ENCODE measurements at regions of chr9 and their contacts with region 1.

Region 1: DNA sequence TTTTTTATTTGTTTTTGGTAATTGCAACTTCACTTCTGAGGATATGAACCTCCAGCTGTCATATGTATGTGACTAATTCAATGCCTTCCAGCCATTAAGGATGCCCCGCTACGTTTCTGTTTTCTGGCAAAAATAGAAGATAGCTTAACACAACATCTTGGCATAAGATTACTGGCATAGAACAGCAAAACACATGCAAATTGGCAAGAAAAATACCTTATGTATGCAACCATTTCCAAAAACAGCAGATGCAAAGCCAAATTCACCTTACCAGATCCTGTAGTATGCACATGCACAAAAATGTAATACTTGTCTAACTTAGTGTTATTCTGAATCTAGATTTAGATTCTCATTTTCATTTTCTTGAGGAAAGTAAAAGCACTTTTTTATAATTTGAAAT is 461.1 kb upstream of the CYLC2 start:
- DNase-seq: no peak
- ATAC-seq: no peak
- H3K4me3 ChIP-seq: no peak overlapping the region
- H3K27ac ChIP-seq: no peak overlapping the region
- H3K4me1 ChIP-seq: no peaks in the 10 kb centered on the region
- H3K27me3 ChIP-seq: no peaks in the 10 kb centered on the region
- CTCF ChIP-seq: no peak

Region 2: DNA sequence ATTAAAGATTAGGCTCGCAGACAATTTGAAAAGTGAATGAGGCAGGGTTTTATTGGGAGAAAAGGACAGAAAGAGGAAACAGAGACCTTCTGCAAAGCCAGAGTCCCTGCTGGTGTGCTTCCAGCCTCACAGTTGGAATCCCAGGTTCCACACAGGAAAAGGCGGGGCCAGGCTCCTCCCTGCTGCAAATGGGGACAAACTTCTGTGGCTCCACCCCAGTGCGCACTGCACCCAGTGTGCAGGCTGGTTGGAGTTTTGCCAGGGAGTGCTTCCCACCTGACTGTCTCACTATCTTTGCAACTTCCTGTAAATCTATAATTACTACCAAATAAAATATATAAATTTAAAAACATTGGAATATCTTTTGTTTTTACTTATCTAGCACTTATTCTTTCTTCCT is 409.6 kb before region 1 on chr9:
- CTCF ChIA-PET with region 1: no interaction called
- POLR2A ChIA-PET with region 1: no interaction called
- in situ Hi-C with region 1: no loop called
- intact Hi-C with region 1: no loop called
- DNase-seq: no peak
- ATAC-seq: no peak
- H3K4me3 ChIP-seq: no peak overlapping the region
- H3K27ac ChIP-seq: no peak overlapping the region
- H3K4me1 ChIP-seq: no peaks in the 10 kb centered on the region
- H3K27me3 ChIP-seq: no peaks in the 10 kb centered on the region
- CTCF ChIP-seq: no peak

Region 3: GRCh38 chr9:102405218-102405867 is 128.7 kb before region 1 on chr9:
- CTCF ChIA-PET with region 1: no interaction called
- POLR2A ChIA-PET with region 1: no interaction called
- in situ Hi-C with region 1: no loop called
- intact Hi-C with region 1: no loop called
- DNase-seq: no peak
- ATAC-seq: no peak
- H3K4me3 ChIP-seq: no peak overlapping the region
- H3K27ac ChIP-seq: no peak overlapping the region
- H3K4me1 ChIP-seq: no peaks in the 10 kb centered on the region
- H3K27me3 ChIP-seq: no peaks in the 10 kb centered on the region
- CTCF ChIP-seq: no peak

Region 4: DNA sequence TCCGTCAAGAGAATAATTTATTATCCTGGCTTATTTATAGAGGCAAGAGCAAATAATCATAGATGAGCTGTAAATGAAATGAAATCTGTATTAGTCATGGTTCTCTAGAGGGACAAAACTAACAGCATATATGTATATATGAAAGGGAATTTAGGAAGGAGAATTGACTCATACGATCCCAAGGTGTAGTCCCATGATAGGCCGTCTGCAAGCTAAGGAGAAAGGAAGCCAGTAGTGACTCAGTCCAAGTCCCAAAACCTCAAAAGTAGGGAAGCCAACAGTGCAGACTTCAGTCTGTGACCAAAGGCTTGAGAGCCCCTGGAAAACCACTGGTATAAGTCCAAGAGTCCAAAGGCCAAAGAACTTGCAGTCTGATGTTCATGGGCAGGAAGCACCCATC is 54.8 kb before region 1 on chr9:
- CTCF ChIA-PET with region 1: no interaction called
- POLR2A ChIA-PET with region 1: no interaction called
- in situ Hi-C with region 1: no loop called
- intact Hi-C with region 1: loop called (anchors 10 kb)
- DNase-seq: no peak
- ATAC-seq: no peak
- H3K4me3 ChIP-seq: no peak overlapping the region
- H3K27ac ChIP-seq: no peak overlapping the region
- H3K4me1 ChIP-seq: no peaks in the 10 kb centered on the region
- H3K27me3 ChIP-seq: no peaks in the 10 kb centered on the region
- CTCF ChIP-seq: no peak

Region 5: GRCh38 chr9:102507044-102507687 is 26.9 kb before region 1 on chr9:
- CTCF ChIA-PET with region 1: no interaction called
- POLR2A ChIA-PET with region 1: no interaction called
- in situ Hi-C with region 1: no loop called
- intact Hi-C with region 1: no loop called
- DNase-seq: no peak
- ATAC-seq: no peak
- H3K4me3 ChIP-seq: no peak overlapping the region
- H3K27ac ChIP-seq: no peak overlapping the region
- H3K4me1 ChIP-seq: no peaks in the 10 kb centered on the region
- H3K27me3 ChIP-seq: no peaks in the 10 kb centered on the region
- CTCF ChIP-seq: no peak

Region 6: DNA sequence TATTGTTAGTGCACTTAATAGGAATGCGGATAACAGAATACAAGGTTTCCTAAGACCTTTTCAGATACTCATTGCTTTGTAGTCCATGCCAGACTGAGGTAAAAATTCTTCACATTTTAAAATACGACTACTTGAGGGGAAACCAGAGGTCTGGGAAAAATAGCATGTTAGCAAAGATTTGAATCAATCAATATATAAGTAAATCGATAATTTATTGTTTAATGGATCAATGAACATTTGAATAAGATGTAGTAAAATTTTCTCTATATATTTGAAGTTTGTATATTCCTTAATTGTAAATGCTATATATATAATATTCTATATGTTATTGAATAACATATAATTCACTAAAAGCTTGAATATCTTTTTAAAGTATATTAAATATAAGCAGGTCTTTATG is 24.6 kb after region 1 on chr9:
- CTCF ChIA-PET with region 1: no interaction called
- POLR2A ChIA-PET with region 1: no interaction called
- in situ Hi-C with region 1: no loop called
- intact Hi-C with region 1: no loop called
- DNase-seq: no peak
- ATAC-seq: no peak
- H3K4me3 ChIP-seq: no peak overlapping the region
- H3K27ac ChIP-seq: no peak overlapping the region
- H3K4me1 ChIP-seq: no peaks in the 10 kb centered on the region
- H3K27me3 ChIP-seq: no peaks in the 10 kb centered on the region
- CTCF ChIP-seq: no peak